Posterior cingulate gyrus (tissue), 11 donors: ENCODE measurements at regions of chr1 and their contacts with region 1.

Region 1: DNA sequence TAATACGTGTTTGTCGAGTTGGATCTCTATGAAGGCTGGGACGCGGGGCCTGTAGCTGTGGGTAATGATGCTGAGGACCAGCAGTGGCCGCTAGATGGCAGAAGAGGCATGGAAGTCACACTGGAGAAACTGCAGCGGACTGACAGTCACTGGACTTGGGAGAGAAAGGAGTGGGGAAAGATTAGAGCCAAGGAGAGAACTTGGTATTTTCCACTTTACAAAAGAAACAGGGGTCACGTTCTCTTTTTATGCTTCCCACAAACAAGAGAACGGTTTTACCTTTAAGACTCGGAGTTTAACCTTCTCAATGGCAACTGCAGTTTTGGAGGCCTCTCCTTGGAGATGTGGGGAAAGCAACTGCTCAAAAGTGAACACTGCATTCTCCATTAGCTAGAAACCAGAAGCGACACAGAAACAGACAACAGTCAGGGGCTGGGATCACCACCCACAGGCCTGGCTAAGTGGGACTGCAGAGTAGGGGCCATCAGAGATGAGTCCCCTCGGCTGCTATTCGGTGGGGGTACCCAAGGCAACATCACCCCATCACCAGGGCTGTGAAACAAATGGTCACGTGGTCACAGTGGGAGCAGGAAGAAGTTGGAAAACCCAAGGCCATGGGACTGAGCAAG is 51.1 kb upstream of the EDEM3 start:
- DNase-seq: peak; percentile 70 to 98 (median 92)

Region 2: DNA sequence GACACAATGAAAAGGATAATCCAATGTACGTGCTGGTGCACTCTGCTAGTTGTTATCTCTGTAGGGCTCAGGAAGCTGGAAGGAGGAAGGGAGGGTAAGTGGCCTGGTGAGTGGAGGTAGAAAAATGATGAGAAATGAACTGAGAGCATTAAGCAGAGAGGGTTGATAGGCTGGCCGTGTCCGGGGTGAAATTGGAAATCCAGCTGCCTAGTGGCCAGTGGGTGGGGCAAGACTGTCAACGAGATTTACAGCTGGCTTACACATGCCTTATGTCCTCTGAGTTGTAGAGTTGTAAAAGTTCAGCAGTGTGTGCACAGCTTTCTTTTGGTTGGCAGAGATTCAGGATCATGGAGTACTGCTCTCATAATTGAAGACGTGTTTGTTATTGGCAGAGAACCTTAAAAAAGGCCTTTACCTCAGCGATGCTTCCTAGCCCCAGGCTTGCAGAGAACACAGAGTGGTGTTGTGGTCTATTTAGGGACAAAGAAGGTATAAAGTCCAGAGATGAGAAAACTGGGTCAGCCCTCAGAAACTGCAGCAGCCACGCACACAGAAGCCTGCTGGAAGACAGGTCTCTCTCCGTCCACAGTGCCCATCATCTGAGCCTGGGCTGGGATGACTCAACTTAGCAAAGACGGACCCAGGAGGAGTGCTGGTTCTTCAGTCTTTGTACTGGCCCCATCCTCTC is 183.5 kb before region 1 on chr1:
- intact Hi-C with region 1: no loop called
- DNase-seq: peak in 3 of 10 donors; percentile 28 to 88 (median 81)

Region 3: GRCh38 chr1:184982002-184982954 is 176.5 kb after region 1 on chr1:
- intact Hi-C with region 1: loop called (anchors 1 kb)
- DNase-seq: peak in 8 of 10 donors; percentile 30 to 92 (median 53)

Region 4: DNA sequence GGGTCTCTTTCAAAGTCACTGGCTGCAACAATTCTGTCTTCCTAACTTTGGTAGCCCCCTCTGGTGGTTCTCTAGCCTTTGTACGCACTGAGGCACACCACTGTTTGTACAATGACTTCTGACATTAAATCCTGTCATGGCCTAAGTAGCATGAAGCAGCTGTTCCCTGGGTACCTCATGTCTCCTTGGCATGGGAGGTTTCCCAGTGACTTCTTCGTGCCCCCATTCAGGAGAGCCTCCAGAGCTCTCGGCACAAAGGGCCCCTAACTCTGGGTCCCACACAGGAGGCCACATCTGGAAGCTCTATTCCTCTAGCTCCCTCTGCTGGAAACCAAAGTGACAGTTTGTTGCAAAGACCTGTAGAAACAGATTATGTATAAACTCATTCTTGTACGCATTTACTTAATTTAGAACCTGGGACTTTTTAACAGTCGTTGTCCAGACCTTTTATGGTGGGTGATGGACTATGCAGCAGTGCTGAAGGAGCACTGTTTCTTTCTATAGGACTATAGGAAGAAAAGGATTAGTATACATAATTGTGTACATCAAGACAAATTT is 364.6 kb after region 1 on chr1:
- intact Hi-C with region 1: loop called (anchors 1 kb)
- DNase-seq: peak in 3 of 10 donors; percentile 14 to 86 (median 36)

Region 5: DNA sequence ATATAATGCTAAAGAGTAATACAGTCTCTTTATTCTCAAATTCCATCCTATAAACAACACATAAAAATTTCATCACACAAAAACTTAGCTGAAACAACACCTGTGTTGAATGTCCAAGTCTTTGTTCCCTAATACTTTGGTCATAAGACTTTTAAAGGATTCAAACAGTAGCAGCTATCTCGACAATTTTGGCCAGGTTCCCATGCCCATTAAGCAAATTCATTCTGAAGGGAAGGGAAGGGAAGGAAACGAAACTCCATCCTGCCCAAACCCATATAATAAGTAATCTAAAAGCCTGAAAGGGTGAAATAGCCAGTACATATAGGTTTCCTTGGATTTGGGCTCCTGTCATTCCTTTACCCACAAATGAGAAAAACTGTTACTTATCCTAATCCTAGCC is 503.8 kb after region 1 on chr1:
- intact Hi-C with region 1: no loop called
- DNase-seq: no peak